ENCODE measurements at regions of chr14 and their contacts with region 1.

Region 1: GRCh38 chr14:52422650-52423356 is 108.7 kb downstream of the PTGER2 start:
- DNase-seq: no peak
- ATAC-seq: no peak
- H3K4me3 ChIP-seq: no peak overlapping the region
- H3K4me3 Mint-ChIP-seq: no peak overlapping the region
- H3K27ac ChIP-seq: no peak overlapping the region
- H3K27ac Mint-ChIP-seq: no peak overlapping the region
- H3K4me1 ChIP-seq: no peaks in the 10 kb centered on the region
- H3K4me1 Mint-ChIP-seq: peaks cover 10 to 14% (median 13%) of the 10 kb centered on the region in 3 donors
- H3K27me3 ChIP-seq: no peaks in the 10 kb centered on the region
- H3K27me3 Mint-ChIP-seq: no peaks in the 10 kb centered on the region

Region 2: GRCh38 chr14:51999084-51999483 is 423.7 kb before region 1 on chr14:
- CTCF ChIA-PET with region 1: no interaction called
- POLR2A ChIA-PET with region 1: interaction called in 1 of 2 experiments, 18 read pairs
- DNase-seq: no peak
- ATAC-seq: no peak
- H3K4me3 ChIP-seq: no peak overlapping the region
- H3K4me3 Mint-ChIP-seq: no peak overlapping the region
- H3K27ac ChIP-seq: no peak overlapping the region
- H3K27ac Mint-ChIP-seq: no peak overlapping the region
- H3K4me1 ChIP-seq: no peaks in the 10 kb centered on the region
- H3K4me1 Mint-ChIP-seq: peaks cover 15 to 23% (median 19%) of the 10 kb centered on the region in 3 donors
- H3K27me3 ChIP-seq: no peaks in the 10 kb centered on the region
- H3K27me3 Mint-ChIP-seq: no peaks in the 10 kb centered on the region

Region 3: GRCh38 chr14:52442166-52442565 is 19.4 kb after region 1 on chr14:
- CTCF ChIA-PET with region 1: interaction called in 1 of 2 experiments, 15 read pairs
- POLR2A ChIA-PET with region 1: no interaction called
- DNase-seq: no peak
- ATAC-seq: no peak
- H3K4me3 ChIP-seq: no peak overlapping the region
- H3K4me3 Mint-ChIP-seq: no peak overlapping the region
- H3K27ac ChIP-seq: no peak overlapping the region
- H3K27ac Mint-ChIP-seq: no peak overlapping the region
- H3K4me1 ChIP-seq: no peaks in the 10 kb centered on the region
- H3K4me1 Mint-ChIP-seq: peaks cover 0 to 8% (median 4%) of the 10 kb centered on the region in 3 donors
- H3K27me3 ChIP-seq: no peaks in the 10 kb centered on the region
- H3K27me3 Mint-ChIP-seq: no peaks in the 10 kb centered on the region

Region 4: DNA sequence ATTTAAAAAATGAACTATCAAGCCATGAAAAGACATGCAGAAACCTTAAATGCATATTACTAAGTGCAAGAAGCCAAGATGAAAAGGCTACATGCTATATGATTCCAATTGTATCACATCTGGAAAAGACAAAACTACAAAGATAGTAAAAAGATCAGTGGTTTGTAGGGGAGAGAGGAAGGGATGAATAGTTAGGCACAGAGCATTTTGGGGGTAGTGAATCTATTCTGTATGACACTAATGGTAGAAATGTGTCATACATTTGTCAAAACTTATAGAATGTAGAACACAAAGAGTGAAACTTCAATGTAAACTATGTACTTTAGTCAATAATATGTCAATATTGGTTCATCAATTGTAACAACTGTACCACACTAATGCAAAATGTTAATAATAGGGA is 108.7 kb after region 1 on chr14:
- CTCF ChIA-PET with region 1: no interaction called
- POLR2A ChIA-PET with region 1: no interaction called
- DNase-seq: no peak
- ATAC-seq: peak in 1 of 4 experiments; percentile 42
- H3K4me3 ChIP-seq: no peak overlapping the region
- H3K4me3 Mint-ChIP-seq: no peak overlapping the region
- H3K27ac ChIP-seq: no peak overlapping the region
- H3K27ac Mint-ChIP-seq: no peak overlapping the region
- H3K4me1 ChIP-seq: no peaks in the 10 kb centered on the region
- H3K4me1 Mint-ChIP-seq: no peaks in the 10 kb centered on the region
- H3K27me3 ChIP-seq: no peaks in the 10 kb centered on the region
- H3K27me3 Mint-ChIP-seq: no peaks in the 10 kb centered on the region